Vagina (tissue), 2 donors: ENCODE measurements at regions of chr3 and their contacts with region 1.

Region 1: DNA sequence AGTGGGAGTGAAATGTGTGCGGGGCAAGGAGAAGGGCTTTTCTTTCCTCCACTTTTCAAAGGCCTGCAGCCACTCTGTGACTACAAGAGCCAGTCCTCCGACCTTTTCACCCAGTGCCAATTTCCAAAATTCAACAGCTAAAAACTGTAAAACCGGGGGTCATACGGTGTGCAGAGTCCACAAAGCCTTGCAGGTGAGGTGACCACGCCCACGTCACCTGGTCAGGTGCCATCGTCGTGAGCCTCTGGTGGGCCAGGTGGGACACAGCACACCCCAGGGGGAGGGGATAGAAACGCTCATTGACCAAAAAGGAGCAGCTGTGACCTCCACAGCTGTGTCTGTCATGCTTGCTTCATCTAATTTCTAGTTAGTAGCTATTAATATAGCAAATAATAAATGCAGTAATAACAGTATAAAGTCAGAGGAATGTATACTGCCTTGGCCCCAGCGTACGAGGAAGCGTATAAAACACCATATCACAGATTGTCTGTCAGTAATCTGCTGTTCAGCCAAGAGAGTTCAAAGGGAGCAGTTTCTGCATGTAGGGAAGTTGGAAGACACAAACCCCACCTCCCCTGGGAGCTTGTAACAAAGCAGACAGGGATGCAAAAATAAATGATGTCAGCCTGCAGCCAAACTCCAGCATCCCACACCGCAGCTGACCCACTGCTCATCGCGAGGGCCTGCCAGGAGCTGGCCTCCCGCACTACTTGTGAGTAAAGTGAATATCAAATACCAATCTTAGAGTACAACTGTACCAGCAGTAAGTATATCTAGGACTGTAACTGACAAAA is 86.7 kb downstream of the VGLL4 start:
- DNase-seq: no peak
- H3K4me3 ChIP-seq: no peak overlapping the region
- H3K27ac ChIP-seq: peak overlapping the region; percentile 78
- H3K4me1 ChIP-seq: peaks cover 90% of the 10 kb centered on the region
- H3K27me3 ChIP-seq: no peaks in the 10 kb centered on the region
- CTCF ChIP-seq: no peak
- POLR2A ChIP-seq: no peak

Region 2: GRCh38 chr3:11581237-11582190 is 24.5 kb after region 1 on chr3:
- intact Hi-C with region 1: no loop called
- DNase-seq: peak in 1 of 2 donors; percentile 82
- H3K4me3 ChIP-seq: peak overlapping the region; percentile 30 to 43
- H3K27ac ChIP-seq: peak overlapping the region; percentile 72
- H3K4me1 ChIP-seq: peaks cover 80% of the 10 kb centered on the region
- H3K27me3 ChIP-seq: no peaks in the 10 kb centered on the region
- CTCF ChIP-seq: no peak
- POLR2A ChIP-seq: no peak

Region 3: DNA sequence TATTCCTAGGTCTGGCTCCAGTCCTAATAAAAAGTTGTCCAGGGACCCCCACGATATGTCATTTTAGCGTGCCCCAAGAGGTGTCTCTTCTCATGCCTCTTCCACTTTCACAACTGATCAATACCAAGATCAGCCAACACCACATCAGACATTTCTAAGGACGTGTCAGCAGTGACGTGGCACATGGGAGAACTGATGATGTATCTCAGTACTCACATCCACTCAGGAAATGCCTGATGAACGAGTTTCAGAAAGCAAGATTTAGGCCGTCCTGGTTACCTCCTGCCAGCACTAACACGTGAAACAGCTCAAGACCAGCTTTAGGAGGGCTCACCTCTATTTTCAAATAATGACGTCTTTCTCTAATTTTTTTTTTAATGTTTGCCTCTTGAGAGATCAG is 67.1 kb after region 1 on chr3:
- intact Hi-C with region 1: no loop called
- DNase-seq: peak in 1 of 2 donors; percentile 47
- H3K4me3 ChIP-seq: no peak overlapping the region
- H3K27ac ChIP-seq: no peak overlapping the region
- H3K4me1 ChIP-seq: peaks cover 74% of the 10 kb centered on the region
- H3K27me3 ChIP-seq: no peaks in the 10 kb centered on the region
- CTCF ChIP-seq: no peak
- POLR2A ChIP-seq: no peak

Region 4: DNA sequence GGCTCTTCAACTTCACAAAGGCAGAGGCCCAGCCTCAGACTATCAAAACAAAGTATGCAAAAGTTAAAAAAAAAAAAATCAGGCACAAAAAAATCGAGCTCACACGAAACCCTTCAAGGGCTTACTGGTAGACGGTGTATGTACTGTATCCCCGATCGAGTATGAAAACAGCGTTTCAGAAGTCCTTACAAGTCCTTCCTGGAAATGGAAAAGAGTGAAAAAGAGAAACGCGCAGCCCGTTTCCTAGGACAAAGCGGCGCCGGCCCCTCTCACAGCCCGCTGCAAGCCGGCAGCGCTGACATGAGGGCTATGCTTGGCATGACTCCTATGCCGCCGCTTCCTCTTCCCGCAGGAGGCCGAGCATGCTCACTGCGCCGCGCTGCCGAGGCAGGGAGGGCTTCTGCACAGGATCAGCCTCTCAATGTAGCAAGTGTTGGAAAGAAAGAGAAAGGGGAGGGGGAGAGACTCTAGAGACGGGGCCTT is 86.6 kb after region 1 on chr3 and contains the start of gene VGLL4:
- intact Hi-C with region 1: loop called (anchors 10 kb)
- DNase-seq: peak in 1 of 2 donors; percentile 93
- H3K4me3 ChIP-seq: peak within 1 kb of the TSS; percentile 59 to 68
- H3K27ac ChIP-seq: peak within 1 kb of the TSS; percentile 87
- H3K4me1 ChIP-seq: peaks cover 36% of the 10 kb centered on the region
- H3K27me3 ChIP-seq: no peaks in the 10 kb centered on the region
- CTCF ChIP-seq: peak in 1 of 3 experiments; percentile 12
- POLR2A ChIP-seq: peak in 1 of 2 donors; percentile 59
- total RNA-seq, gene VGLL4: 99.4 TPM

Region 5: GRCh38 chr3:11719406-11720230 is 162.6 kb after region 1 on chr3:
- intact Hi-C with region 1: no loop called
- DNase-seq: no peak
- H3K4me3 ChIP-seq: peak overlapping the region; percentile 67 to 92
- H3K27ac ChIP-seq: peak overlapping the region; percentile 96
- H3K4me1 ChIP-seq: peaks cover 35% of the 10 kb centered on the region
- H3K27me3 ChIP-seq: no peaks in the 10 kb centered on the region
- CTCF ChIP-seq: no peak
- POLR2A ChIP-seq: no peak